ENCODE measurements at regions of chr7 and their contacts with region 1.

Region 1: DNA sequence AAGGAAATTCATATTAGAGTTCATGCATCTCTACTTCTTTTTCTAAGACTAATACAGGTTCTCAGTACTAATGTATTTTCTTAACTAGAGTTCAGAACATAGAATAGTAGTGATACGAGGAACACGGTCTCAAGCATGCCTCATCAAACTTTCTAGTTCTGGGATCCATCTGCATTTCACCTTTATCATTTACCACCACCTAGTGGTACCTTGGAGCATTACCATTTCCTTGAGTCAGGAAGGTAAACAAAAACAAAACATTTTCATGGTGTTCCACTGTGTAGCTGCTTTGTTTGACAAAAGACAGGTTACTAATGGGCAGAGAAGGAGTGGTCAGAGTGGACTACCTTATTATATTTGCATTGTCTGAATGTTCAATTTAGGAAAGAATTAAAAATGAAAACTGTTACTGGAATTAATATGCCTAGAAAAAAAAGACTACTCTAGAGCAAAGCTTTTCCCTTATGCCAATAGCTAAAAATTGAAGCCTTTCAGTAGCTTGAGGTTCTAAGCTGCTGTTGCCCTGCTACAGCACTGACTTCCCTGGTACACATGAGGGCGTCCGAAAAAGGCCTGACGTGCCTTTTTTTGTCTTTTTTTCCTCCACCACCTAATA is 44.5 kb downstream of the STARD3NL start:
- DNase-seq: peak; percentile 51 to 58
- H3K4me3 ChIP-seq: no peak overlapping the region
- H3K4me1 ChIP-seq: no peaks in the 10 kb centered on the region
- H3K27me3 ChIP-seq: no peaks in the 10 kb centered on the region

Region 2: DNA sequence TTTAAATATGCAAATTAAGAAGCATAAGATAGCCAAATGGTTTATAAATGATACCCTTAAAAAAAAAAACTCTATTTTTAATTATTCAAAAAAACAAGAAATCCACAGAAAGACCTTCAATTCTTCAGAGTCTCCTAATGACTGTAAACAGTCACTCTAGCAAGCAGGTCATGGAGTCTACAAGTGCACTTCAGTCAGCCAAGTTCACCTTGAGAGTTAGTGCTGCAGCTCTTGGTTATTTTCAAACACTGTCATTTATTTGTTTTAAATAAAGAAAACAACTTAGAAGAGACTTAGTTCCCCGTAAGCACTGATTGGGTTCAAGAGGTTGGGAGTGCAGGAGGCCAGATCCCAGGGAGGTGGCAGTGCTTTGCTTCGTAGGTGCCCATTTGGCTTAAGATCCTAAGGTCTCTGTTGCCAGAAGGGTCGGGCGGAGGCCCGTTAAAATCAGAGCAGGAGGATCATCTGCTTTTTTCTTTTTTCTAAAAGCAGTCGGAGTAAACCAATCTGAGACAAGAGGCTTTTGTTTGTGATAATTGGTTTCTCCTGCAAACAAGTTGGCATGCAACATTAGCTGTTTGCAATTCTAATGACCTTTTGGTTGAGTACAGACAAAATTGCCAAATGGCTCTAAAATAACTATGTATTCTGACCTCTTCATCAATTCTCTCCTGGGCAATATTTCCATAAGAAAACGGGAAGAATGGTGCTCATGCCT is 687.5 kb before region 1 on chr7:
- in situ Hi-C with region 1: no loop called
- DNase-seq: no peak
- H3K4me3 ChIP-seq: no peak overlapping the region
- H3K4me1 ChIP-seq: no peaks in the 10 kb centered on the region
- H3K27me3 ChIP-seq: no peaks in the 10 kb centered on the region

Region 3: DNA sequence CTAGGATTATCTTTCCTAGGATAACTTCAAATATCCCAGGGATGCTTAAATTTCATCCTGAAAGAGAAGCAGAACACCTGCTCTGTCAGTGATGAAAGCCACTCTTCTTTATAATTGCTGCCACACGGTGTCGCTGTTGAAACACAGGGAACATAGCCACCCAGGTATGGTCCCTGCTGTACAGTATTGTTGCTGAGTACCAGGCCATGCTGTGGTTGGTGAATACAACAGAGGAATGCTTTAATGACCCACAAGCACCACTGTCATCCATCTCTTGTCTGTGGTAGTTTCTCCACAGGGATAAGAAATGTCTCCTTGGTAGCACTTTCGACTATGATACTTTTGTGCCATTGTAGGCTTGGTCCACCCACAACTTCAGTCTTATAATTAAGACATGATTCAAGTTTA is 115.1 kb before region 1 on chr7:
- in situ Hi-C with region 1: loop called (anchors 5 kb)
- DNase-seq: peak; percentile 52 to 81
- H3K4me3 ChIP-seq: no peak overlapping the region
- H3K4me1 ChIP-seq: no peaks in the 10 kb centered on the region
- H3K27me3 ChIP-seq: peaks cover 13% of the 10 kb centered on the region

Region 4: GRCh38 chr7:38335492-38336147 is 113.0 kb after region 1 on chr7:
- in situ Hi-C with region 1: loop called (anchors 10 kb)
- DNase-seq: peak; percentile 72 to 92
- H3K4me3 ChIP-seq: no peak overlapping the region
- H3K4me1 ChIP-seq: no peaks in the 10 kb centered on the region
- H3K27me3 ChIP-seq: no peaks in the 10 kb centered on the region

Region 5: DNA sequence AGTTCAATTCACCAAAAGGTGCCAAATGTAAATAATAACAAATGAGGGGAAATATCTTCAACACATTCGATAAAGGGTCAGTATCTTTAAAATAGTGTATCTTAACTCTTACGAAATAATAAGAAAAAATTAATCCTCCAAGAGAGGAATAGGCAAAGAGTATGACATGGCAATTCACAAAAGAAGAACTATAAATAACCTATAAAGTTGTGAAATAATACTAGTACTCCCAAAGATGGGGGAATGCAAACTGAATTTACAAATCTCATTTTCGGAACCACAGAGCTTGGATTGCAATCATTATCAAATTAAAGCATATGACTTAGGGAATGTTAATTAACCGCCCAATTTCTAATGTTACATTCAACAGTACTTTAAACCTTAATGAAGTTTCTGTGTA is 129.0 kb after region 1 on chr7:
- in situ Hi-C with region 1: no loop called
- DNase-seq: no peak
- H3K4me3 ChIP-seq: no peak overlapping the region
- H3K4me1 ChIP-seq: no peaks in the 10 kb centered on the region
- H3K27me3 ChIP-seq: no peaks in the 10 kb centered on the region

Region 6: DNA sequence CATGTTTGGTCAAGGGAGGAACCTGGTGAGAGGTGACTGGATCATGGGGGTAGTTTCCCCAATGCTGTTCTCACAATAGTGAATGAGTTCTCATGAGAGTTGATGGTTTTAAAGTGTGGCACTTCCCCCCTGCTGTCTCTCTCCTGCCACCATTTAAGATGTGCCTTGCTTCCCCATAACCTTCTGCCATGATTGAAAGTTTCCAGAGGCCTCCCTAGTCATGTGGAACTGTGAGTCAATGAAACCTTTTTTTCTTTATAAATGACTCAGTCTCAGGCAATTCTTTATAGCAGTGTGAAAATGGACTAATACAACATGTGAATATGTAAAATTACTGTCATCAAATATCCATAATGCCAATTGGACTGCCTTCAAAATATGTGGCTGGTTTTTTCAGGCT is 216.4 kb after region 1 on chr7:
- in situ Hi-C with region 1: no loop called
- DNase-seq: no peak
- H3K4me3 ChIP-seq: no peak overlapping the region
- H3K4me1 ChIP-seq: no peaks in the 10 kb centered on the region
- H3K27me3 ChIP-seq: no peaks in the 10 kb centered on the region